Colonic mucosa (tissue), 4 donors: ENCODE measurements at regions of chr3 and their contacts with region 1.

Region 1: DNA sequence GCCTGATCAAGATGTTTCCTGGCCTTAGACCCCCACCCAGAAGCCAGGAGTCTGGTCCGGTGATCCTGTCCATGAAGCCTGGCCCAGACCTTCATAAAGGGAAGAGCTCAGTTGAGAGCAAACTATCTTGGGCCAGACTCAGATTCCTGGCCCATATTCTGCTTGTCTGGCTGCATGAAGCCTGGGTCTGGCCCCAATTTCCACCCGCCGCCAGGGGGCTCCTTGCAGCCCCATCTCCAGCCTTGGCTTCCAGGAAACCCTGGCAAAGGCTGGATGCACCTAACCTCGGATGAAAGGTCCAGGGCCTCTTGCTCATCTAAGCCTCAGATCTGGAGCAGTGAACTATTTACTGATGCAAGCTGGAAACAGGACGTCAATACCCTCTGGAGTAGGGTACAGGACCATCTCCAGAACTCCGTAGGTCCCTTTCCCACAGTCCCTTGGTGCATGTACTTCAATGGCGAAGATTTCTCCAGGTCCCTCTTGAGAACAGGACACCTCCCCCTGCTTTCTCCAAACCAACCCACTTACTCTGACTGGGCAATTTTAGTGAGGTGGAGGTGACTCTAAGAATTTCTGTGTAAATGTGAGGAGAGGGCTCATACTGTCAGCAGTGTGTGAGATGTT is 5.6 kb downstream of the FOXL2 start:
- DNase-seq: peak; percentile 66
- H3K4me3 ChIP-seq: no peak overlapping the region
- H3K27ac ChIP-seq: no peak overlapping the region
- H3K4me1 ChIP-seq: peaks cover 30% of the 10 kb centered on the region
- H3K27me3 ChIP-seq: peaks cover 99% of the 10 kb centered on the region
- CTCF ChIP-seq: peak; percentile 45

Region 2: DNA sequence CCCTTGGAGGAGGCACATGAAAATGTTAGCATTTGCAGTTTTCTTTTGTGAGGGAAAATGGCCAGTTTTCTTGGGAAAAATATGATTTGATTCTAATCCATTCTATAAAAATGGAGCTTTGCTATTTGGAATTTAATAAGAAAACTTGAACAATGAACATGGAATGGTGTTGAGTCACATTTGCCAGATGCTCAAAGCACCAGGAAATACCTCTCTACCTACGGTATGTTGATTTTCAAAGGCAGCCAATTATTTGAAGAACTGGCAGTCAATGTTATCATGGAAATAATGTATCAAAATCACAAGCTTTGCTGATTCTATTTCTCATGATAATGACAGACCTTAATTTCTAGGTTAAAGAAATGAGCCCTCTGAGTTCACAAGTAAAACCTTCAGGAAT is 626.6 kb before region 1 on chr3:
- intact Hi-C with region 1: no loop called
- DNase-seq: no peak
- H3K4me3 ChIP-seq: no peak overlapping the region
- H3K27ac ChIP-seq: no peak overlapping the region
- H3K4me1 ChIP-seq: no peaks in the 10 kb centered on the region
- H3K27me3 ChIP-seq: no peaks in the 10 kb centered on the region
- CTCF ChIP-seq: no peak

Region 3: GRCh38 chr3:139202226-139202958 is 261.0 kb after region 1 on chr3:
- intact Hi-C with region 1: loop called (anchors 10 kb)
- DNase-seq: peak; percentile 76
- H3K4me3 ChIP-seq: no peak overlapping the region
- H3K27ac ChIP-seq: no peak overlapping the region
- H3K4me1 ChIP-seq: peaks cover 6% of the 10 kb centered on the region
- H3K27me3 ChIP-seq: no peaks in the 10 kb centered on the region
- CTCF ChIP-seq: peak; percentile 31

Region 4: GRCh38 chr3:139329345-139329850 is 388.0 kb after region 1 on chr3:
- intact Hi-C with region 1: loop called (anchors 5 kb)
- DNase-seq: peak; percentile 92
- H3K4me3 ChIP-seq: no peak overlapping the region
- H3K27ac ChIP-seq: no peak overlapping the region
- H3K4me1 ChIP-seq: no peaks in the 10 kb centered on the region
- H3K27me3 ChIP-seq: peaks cover 9% of the 10 kb centered on the region
- CTCF ChIP-seq: peak; percentile 99